ENCODE measurements at regions of chr16 and their contacts with region 1.

Region 1: DNA sequence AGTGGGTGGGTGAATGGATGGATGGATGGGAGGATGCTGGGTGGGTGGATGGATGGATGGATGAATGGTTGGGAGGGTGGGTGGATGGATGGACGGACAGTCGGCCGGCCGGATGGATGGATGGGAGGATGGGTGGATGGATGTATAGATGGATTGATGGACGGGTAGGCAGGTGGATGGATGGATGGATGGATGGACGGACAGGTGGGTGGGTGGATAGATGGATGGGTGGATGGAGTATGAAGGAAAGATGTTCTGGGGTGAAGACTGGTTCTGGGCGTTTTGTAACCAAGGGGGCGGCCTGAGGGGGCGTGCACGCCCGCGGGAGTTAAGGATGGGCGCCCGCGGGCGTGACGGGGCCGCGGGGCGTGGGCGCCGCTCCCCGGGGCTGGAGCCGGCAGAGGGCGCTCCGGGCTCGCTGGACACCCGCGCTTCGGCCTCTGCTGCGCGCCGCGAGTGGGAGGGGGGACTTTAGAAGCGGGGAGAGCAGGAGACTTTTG is at the start of gene NECAB2:
- DNase-seq: peak; percentile 51 to 78 (median 65)
- H3K4me3 ChIP-seq: no peak within 1 kb of the TSS
- H3K27ac ChIP-seq: no peak within 1 kb of the TSS
- H3K4me1 ChIP-seq: no peaks in the 10 kb centered on the region
- H3K27me3 ChIP-seq: no peaks in the 10 kb centered on the region
- CTCF ChIP-seq: peak; percentile 46
- total RNA-seq, gene NECAB2: 0.82 TPM

Region 2: GRCh38 chr16:83835586-83836566 is 132.0 kb before region 1 on chr16:
- intact Hi-C with region 1: no loop called
- DNase-seq: no peak
- H3K4me3 ChIP-seq: no peak overlapping the region
- H3K27ac ChIP-seq: no peak overlapping the region
- H3K4me1 ChIP-seq: no peaks in the 10 kb centered on the region
- H3K27me3 ChIP-seq: no peaks in the 10 kb centered on the region
- CTCF ChIP-seq: no peak

Region 3: GRCh38 chr16:83878838-83879237 is 89.0 kb before region 1 on chr16:
- intact Hi-C with region 1: no loop called
- DNase-seq: peak in 2 of 5 donors; percentile 62 to 82
- H3K4me3 ChIP-seq: no peak overlapping the region
- H3K27ac ChIP-seq: no peak overlapping the region
- H3K4me1 ChIP-seq: no peaks in the 10 kb centered on the region
- H3K27me3 ChIP-seq: no peaks in the 10 kb centered on the region
- CTCF ChIP-seq: peak; percentile 44

Region 4: DNA sequence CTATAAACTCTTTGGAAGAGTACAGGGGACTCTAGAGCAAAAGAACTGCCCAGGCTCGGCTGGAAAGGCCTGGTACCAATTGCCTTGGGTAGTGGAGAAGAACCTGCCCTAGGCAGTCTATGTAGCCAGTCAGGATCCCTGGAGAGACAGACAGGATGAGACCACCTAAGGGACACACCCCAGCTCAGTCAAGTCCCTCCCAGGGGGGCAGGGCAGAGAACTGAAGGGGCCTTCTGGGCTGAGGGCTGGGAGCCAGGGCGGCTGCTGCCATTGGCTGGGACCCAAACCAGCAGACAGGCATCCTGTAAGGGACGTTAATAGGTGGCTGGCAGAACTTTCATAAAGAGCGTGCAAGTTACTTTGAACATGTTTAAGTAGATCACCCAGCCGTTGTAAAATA is 87.5 kb after region 1 on chr16:
- intact Hi-C with region 1: loop called (anchors 10 kb)
- DNase-seq: no peak
- H3K4me3 ChIP-seq: no peak overlapping the region
- H3K27ac ChIP-seq: no peak overlapping the region
- H3K4me1 ChIP-seq: no peaks in the 10 kb centered on the region
- H3K27me3 ChIP-seq: no peaks in the 10 kb centered on the region
- CTCF ChIP-seq: no peak

Region 5: GRCh38 chr16:84166796-84167695 is 199.2 kb after region 1 on chr16:
- intact Hi-C with region 1: no loop called
- DNase-seq: no peak
- H3K4me3 ChIP-seq: no peak overlapping the region
- H3K27ac ChIP-seq: no peak overlapping the region
- H3K4me1 ChIP-seq: no peaks in the 10 kb centered on the region
- H3K27me3 ChIP-seq: no peaks in the 10 kb centered on the region
- CTCF ChIP-seq: no peak